H1 (cell line): ENCODE measurements at regions of chr17 and their contacts with region 1.

Region 1: DNA sequence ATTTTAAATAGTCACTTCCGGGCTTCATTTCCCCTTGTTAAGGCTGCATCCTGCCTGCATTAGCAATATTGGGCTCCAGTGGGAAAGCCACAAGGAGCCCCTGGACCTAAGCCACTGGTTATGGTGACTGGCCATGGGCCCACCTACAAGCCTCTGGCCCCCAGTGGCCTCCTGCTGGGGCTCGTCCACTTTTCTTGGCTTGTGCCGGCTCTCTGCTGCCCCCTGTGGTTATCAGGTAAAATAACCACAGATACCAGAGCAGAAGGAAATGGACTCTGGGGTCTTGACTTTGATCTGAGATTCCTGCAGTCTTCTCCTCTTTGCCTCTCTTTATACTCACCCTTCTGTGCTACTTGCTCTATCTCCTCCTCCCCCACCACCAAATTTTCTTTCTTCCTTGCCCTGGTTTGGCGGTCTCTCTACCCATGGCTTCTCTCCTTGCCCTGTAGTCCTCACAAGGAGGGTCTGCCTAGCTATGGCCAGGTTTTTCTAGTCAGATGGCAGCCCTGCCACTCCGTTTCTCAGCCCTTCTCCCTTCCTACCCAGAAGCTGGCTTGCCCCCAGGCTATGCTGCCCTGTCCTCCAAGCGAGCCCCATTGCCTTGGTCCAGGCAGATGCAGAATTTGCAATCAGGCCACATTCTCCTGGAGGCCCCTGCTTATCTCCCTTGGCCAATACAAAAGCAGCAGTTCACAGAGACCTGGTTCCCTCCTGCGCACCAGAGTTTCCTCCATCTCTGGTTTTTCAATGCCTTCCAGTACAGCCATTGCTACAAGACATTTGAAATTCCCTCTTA is 82.9 kb upstream of the RCVRN start:
- DNase-seq: peak in 1 of 2 experiments; percentile 72
- H3K4me3 ChIP-seq: no peak overlapping the region
- H3K27ac ChIP-seq: no peak overlapping the region
- H3K4me1 ChIP-seq: no peaks in the 10 kb centered on the region
- H3K27me3 ChIP-seq: no peaks in the 10 kb centered on the region
- CTCF ChIP-seq: peak; percentile 60 to 79 (median 66)
- EP300 ChIP-seq: no peak
- POLR2A ChIP-seq: no peak
- RAD21 ChIP-seq: peak; percentile 39 to 61

Region 2: GRCh38 chr17:9959377-9959981 is 28.5 kb before region 1 on chr17:
- CTCF ChIA-PET with region 1: interaction called, 140 read pairs
- POLR2A ChIA-PET with region 1: no interaction called
- DNase-seq: peak; percentile 47 to 89
- H3K4me3 ChIP-seq: peak overlapping the region in 3 of 4 experiments; percentile 11 to 49 (median 29); a peak in 5 of 8 replicates
- H3K27ac ChIP-seq: no peak overlapping the region
- H3K4me1 ChIP-seq: peaks cover 10 to 26% (median 15%) of the 10 kb centered on the region in 4 experiments
- H3K27me3 ChIP-seq: peaks cover 0 to 2% (median 0%) of the 10 kb centered on the region in 4 experiments; a peak in 4 of 7 replicates
- CTCF ChIP-seq: peak; percentile 83 to 85 (median 84)
- EP300 ChIP-seq: no peak
- POLR2A ChIP-seq: no peak
- RAD21 ChIP-seq: peak; percentile 50 to 69

Region 3: GRCh38 chr17:9971991-9972599 is 15.9 kb before region 1 on chr17:
- CTCF ChIA-PET with region 1: interaction called, 140 read pairs
- POLR2A ChIA-PET with region 1: no interaction called
- DNase-seq: no peak
- H3K4me3 ChIP-seq: no peak overlapping the region
- H3K27ac ChIP-seq: no peak overlapping the region
- H3K4me1 ChIP-seq: peaks cover 0 to 2% (median 0%) of the 10 kb centered on the region in 4 experiments; a peak in 1 of 7 replicates
- H3K27me3 ChIP-seq: no peaks in the 10 kb centered on the region
- CTCF ChIP-seq: no peak
- EP300 ChIP-seq: no peak
- POLR2A ChIP-seq: no peak
- RAD21 ChIP-seq: no peak

Region 4: DNA sequence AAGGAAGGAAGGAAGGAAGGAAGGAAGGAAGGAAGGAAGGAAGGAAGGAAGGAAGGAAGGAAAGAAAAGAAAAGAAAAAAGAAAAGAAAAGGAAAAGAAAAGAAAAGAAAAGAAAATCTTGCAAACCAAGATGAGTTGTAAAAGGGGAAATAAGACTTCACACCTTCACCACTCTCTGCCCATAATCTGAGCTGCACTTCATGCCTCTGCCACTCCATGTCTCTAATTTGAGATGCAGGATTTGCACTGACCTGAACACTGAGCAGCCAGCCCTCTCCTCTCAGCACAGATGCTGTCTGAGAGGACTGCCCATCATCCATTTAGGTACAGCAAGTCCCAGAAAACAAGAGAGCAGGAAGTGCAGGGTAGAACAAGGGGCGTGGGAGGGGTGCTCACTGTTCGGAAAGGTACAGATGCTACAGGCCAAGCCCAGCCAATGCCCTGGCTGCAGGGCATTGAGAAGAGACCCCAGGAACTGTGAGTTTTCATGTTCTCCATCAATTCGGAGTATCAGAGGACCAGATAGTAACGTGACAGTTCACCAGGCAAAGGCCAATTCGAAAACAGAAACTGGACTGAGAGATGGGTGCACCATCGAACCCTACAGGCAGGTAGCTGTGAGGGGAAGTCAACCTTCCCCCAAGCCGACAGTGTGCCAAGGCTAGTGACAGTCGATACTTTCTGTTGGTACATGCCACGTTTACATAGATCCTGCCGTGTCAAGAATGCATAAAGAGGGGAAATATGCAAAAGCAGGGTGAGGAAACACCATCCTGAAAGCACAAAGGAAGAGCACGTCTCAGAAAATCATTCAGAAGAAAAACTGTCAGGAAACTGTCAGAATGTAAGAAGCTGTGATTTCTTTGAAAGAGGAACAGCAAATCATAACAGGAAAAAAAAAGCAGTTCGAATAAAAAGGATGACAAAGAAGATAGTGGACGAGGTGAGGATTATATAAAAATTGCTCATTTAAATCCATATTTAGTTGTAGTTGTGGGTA is 59.1 kb after region 1 on chr17:
- CTCF ChIA-PET with region 1: no interaction called
- POLR2A ChIA-PET with region 1: no interaction called
- DNase-seq: no peak
- H3K4me3 ChIP-seq: no peak overlapping the region
- H3K27ac ChIP-seq: no peak overlapping the region
- H3K4me1 ChIP-seq: peaks cover 0 to 7% (median 2%) of the 10 kb centered on the region in 4 experiments; a peak in 1 of 7 replicates
- H3K27me3 ChIP-seq: no peaks in the 10 kb centered on the region
- CTCF ChIP-seq: no peak
- EP300 ChIP-seq: no peak
- POLR2A ChIP-seq: no peak
- RAD21 ChIP-seq: no peak

Region 5: DNA sequence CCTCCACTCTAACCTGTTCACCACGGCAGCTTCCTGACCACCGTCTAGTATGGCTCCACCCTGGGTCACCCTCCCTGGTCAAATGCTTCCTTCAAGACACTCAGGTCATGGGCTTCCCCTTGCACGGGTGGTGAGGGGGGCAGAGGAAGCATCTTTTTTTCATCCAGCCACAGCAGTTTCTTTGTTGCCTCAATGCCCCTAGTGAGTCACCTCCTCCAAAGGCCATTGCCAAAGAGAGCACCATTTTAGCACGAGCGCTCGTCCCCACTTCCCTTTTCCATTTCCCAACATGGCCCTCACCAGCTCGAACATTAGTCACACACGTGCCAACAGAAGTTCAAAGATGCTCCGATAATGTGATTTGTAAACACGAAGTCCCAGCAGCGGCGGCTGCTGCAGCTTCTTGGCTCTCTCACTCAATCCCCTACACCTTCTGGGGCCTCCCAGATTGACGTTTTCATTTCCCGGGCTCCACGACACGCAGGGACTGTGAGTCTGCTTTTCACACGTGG is 75.8 kb after region 1 on chr17:
- CTCF ChIA-PET with region 1: no interaction called
- POLR2A ChIA-PET with region 1: no interaction called
- DNase-seq: no peak
- H3K4me3 ChIP-seq: no peak overlapping the region
- H3K27ac ChIP-seq: no peak overlapping the region
- H3K4me1 ChIP-seq: peaks cover 0 to 5% (median 3%) of the 10 kb centered on the region in 4 experiments; a peak in 5 of 7 replicates
- H3K27me3 ChIP-seq: no peaks in the 10 kb centered on the region
- CTCF ChIP-seq: no peak
- EP300 ChIP-seq: no peak
- POLR2A ChIP-seq: no peak
- RAD21 ChIP-seq: no peak

Region 6: GRCh38 chr17:10169290-10169689 is 181.3 kb after region 1 on chr17:
- CTCF ChIA-PET with region 1: no interaction called
- POLR2A ChIA-PET with region 1: no interaction called
- DNase-seq: no peak
- H3K4me3 ChIP-seq: no peak overlapping the region
- H3K27ac ChIP-seq: no peak overlapping the region
- H3K4me1 ChIP-seq: no peaks in the 10 kb centered on the region
- H3K27me3 ChIP-seq: no peaks in the 10 kb centered on the region; a peak in 1 of 7 replicates
- CTCF ChIP-seq: no peak
- EP300 ChIP-seq: no peak
- POLR2A ChIP-seq: no peak
- RAD21 ChIP-seq: no peak

Region 7: GRCh38 chr17:10226930-10227685 is 239.1 kb after region 1 on chr17:
- CTCF ChIA-PET with region 1: interaction called, 34 read pairs
- POLR2A ChIA-PET with region 1: no interaction called
- DNase-seq: peak; percentile 46 to 92
- H3K4me3 ChIP-seq: no peak overlapping the region
- H3K27ac ChIP-seq: no peak overlapping the region
- H3K4me1 ChIP-seq: no peaks in the 10 kb centered on the region
- H3K27me3 ChIP-seq: no peaks in the 10 kb centered on the region
- CTCF ChIP-seq: peak; percentile 85 to 91 (median 85)
- EP300 ChIP-seq: no peak
- POLR2A ChIP-seq: no peak
- RAD21 ChIP-seq: peak; percentile 92 to 94